ENCODE measurements at regions of chr11 and their contacts with region 1.

Region 1: GRCh38 chr11:73242251-73243079 is 24.4 kb downstream of the P2RY2 start:
- DNase-seq: peak in 4 of 5 donors; percentile 45 to 52 (median 48)
- H3K4me3 ChIP-seq: no peak overlapping the region
- H3K4me3 Mint-ChIP-seq: peak overlapping the region in 2 of 8 donors; percentile 52 to 56
- H3K27ac ChIP-seq: no peak overlapping the region
- H3K27ac Mint-ChIP-seq: peak overlapping the region in 1 of 7 donors; percentile 68
- H3K4me1 ChIP-seq: no peaks in the 10 kb centered on the region
- H3K4me1 Mint-ChIP-seq: peaks cover 0 to 4% (median 3%) of the 10 kb centered on the region in 4 donors
- H3K27me3 ChIP-seq: no peaks in the 10 kb centered on the region
- H3K27me3 Mint-ChIP-seq: peaks cover 2 to 12% of the 10 kb centered on the region in 2 donors

Region 2: DNA sequence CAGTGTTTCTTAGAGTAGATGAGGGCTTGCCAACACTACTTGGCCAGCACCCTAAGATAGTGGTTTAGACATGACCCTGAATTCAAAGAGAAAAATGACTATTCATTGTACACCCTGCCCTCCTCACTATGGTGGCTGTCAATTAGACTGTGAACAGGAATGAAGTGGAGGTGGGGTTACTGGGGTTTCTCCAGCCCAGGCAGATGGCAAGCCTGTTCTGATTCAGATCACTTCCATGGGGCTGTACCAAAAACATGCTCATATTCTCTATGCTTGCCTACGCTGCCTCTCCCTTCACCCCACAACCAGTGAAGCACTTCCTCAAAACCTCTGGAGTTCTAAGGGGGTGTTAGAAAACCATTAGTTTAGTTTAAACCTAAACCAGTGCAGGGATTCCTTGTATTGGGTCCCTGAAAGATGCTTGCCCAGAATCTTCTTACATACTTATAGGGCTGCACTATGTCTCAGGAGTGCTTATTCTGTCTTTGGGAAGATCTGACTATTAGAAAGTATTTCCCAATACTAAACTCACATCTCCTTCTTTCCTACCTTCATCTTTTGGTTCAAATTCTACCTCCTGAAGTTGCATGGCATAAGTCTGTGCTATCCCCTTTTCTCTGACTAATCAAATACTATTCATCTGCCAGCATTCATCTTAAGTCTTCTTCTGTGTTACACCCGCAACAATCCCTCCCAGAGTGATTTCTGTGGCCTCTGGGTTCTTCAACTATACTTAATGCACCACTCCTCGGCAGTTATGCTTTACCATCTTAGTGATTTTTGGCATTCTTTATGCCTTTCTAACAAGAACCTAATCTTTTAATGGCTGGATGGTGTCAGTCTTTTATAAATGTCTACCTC is 356.5 kb before region 1 on chr11:
- CTCF ChIA-PET with region 1: no interaction called
- POLR2A ChIA-PET with region 1: no interaction called
- intact Hi-C with region 1: no loop called
- DNase-seq: no peak
- H3K4me3 ChIP-seq: no peak overlapping the region
- H3K4me3 Mint-ChIP-seq: no peak overlapping the region
- H3K27ac ChIP-seq: no peak overlapping the region
- H3K27ac Mint-ChIP-seq: peak overlapping the region in 2 of 7 donors; percentile 8 to 64
- H3K4me1 ChIP-seq: no peaks in the 10 kb centered on the region
- H3K4me1 Mint-ChIP-seq: no peaks in the 10 kb centered on the region
- H3K27me3 ChIP-seq: no peaks in the 10 kb centered on the region
- H3K27me3 Mint-ChIP-seq: no peaks in the 10 kb centered on the region

Region 3: DNA sequence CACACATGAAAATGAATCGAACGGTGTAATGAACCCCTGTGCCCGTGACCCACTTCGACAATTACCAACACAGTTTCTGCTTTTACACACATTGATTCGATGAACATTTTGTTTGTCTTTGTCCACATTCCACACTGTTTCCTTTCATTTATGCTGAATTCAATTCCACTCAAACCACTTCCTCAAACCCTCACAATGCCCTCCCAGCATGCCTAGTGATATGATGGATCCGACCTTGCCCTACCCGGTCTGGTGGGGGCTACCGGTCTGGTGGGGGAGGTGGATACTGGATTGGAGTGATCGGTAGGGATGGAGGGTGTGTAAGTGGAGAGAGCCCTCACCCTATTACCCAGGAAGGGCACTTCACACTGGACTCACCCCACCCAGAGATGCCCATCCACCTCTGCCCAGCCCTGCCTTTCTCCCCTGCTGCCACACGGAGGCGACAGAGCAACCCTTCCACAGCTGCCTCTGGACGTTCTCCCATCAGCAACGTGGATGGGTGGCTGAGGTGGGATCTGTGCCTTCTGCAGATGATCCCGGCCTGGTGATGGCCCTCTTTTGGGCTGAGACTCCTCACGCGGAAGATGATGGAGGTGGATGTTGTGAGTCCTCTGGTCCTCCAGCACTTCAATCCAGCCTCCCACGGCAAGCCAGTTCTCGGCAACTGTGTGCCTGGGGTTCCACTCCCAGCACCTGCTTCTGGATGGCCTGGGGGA is 57.4 kb before region 1 on chr11:
- CTCF ChIA-PET with region 1: no interaction called
- POLR2A ChIA-PET with region 1: no interaction called
- intact Hi-C with region 1: loop called (anchors 1 kb)
- DNase-seq: peak in 4 of 5 donors; percentile 24 to 41 (median 33)
- H3K4me3 ChIP-seq: no peak overlapping the region
- H3K4me3 Mint-ChIP-seq: peak overlapping the region in 1 of 8 donors; percentile 48
- H3K27ac ChIP-seq: no peak overlapping the region
- H3K27ac Mint-ChIP-seq: no peak overlapping the region
- H3K4me1 ChIP-seq: no peaks in the 10 kb centered on the region
- H3K4me1 Mint-ChIP-seq: peaks cover 0 to 5% (median 3%) of the 10 kb centered on the region in 4 donors
- H3K27me3 ChIP-seq: no peaks in the 10 kb centered on the region
- H3K27me3 Mint-ChIP-seq: peaks cover 3 to 14% of the 10 kb centered on the region in 2 donors